H1 (cell line): ENCODE measurements at regions of chr6 and their contacts with region 1.

Region 1: GRCh38 chr6:76697585-76697984 is 625.1 kb upstream of the IMPG1 start:
- DNase-seq: no peak
- H3K4me3 ChIP-seq: no peak overlapping the region
- H3K27ac ChIP-seq: no peak overlapping the region
- H3K4me1 ChIP-seq: no peaks in the 10 kb centered on the region
- H3K27me3 ChIP-seq: no peaks in the 10 kb centered on the region
- CTCF ChIP-seq: peak in 2 of 3 experiments; percentile 33 to 59; a peak in 3 of 4 replicates
- EP300 ChIP-seq: no peak
- POLR2A ChIP-seq: no peak
- RAD21 ChIP-seq: peak; percentile 43 to 53

Region 2: DNA sequence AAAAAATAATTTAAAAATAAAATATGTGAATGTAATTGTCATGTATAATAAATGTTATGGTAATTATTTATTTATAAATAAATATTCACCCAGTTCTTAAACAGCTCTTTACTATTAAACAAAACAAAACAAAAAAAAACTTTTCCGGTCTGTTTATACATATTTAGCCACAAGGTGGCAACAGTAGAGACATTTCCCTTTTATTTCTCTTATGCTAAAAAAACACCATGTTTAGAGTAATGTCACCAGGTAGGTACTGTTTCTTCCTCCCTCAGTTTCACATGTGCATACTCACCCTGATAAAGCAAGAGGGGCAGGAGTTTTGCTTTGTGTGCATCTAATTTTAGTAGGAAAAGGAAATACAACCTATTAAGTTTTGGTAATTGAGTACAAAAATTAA is 14.7 kb before region 1 on chr6:
- CTCF ChIA-PET with region 1: interaction called, 18 read pairs
- POLR2A ChIA-PET with region 1: no interaction called
- DNase-seq: no peak
- H3K4me3 ChIP-seq: no peak overlapping the region
- H3K27ac ChIP-seq: no peak overlapping the region
- H3K4me1 ChIP-seq: peaks cover 2 to 16% (median 12%) of the 10 kb centered on the region in 4 experiments; a peak in 5 of 7 replicates
- H3K27me3 ChIP-seq: no peaks in the 10 kb centered on the region
- CTCF ChIP-seq: peak in 2 of 3 experiments; percentile 22 to 24; a peak in 2 of 4 replicates
- EP300 ChIP-seq: no peak
- POLR2A ChIP-seq: no peak
- RAD21 ChIP-seq: peak in 1 of 2 experiments; percentile 18; a peak in 2 of 4 replicates

Region 3: GRCh38 chr6:76852776-76853175 is 155.2 kb after region 1 on chr6:
- CTCF ChIA-PET with region 1: interaction called, 10 read pairs
- POLR2A ChIA-PET with region 1: no interaction called
- DNase-seq: no peak
- H3K4me3 ChIP-seq: peak overlapping the region in 1 of 4 experiments; percentile 34; a peak in 1 of 8 replicates
- H3K27ac ChIP-seq: no peak overlapping the region
- H3K4me1 ChIP-seq: peaks cover 0 to 2% (median 0%) of the 10 kb centered on the region in 4 experiments; a peak in 2 of 7 replicates
- H3K27me3 ChIP-seq: peaks cover 0 to 1% (median 0%) of the 10 kb centered on the region in 4 experiments; a peak in 1 of 7 replicates
- CTCF ChIP-seq: no peak
- EP300 ChIP-seq: no peak
- POLR2A ChIP-seq: no peak
- RAD21 ChIP-seq: no peak

Region 4: GRCh38 chr6:76861403-76861802 is 163.8 kb after region 1 on chr6:
- CTCF ChIA-PET with region 1: interaction called, 10 read pairs
- POLR2A ChIA-PET with region 1: no interaction called
- DNase-seq: peak in 1 of 2 experiments; percentile 58
- H3K4me3 ChIP-seq: no peak overlapping the region
- H3K27ac ChIP-seq: no peak overlapping the region
- H3K4me1 ChIP-seq: 0 out of 7 replicates have a peak, but pooled peaks cover 0 to 2% (median 0%) of the 10 kb centered on the region in 4 experiments
- H3K27me3 ChIP-seq: no peaks in the 10 kb centered on the region
- CTCF ChIP-seq: peak in 2 of 3 experiments; percentile 50 to 64; a peak in 3 of 4 replicates
- EP300 ChIP-seq: no peak
- POLR2A ChIP-seq: no peak
- RAD21 ChIP-seq: peak; percentile 56 to 66